ENCODE measurements at regions of chr10 and their contacts with region 1.

Region 1: DNA sequence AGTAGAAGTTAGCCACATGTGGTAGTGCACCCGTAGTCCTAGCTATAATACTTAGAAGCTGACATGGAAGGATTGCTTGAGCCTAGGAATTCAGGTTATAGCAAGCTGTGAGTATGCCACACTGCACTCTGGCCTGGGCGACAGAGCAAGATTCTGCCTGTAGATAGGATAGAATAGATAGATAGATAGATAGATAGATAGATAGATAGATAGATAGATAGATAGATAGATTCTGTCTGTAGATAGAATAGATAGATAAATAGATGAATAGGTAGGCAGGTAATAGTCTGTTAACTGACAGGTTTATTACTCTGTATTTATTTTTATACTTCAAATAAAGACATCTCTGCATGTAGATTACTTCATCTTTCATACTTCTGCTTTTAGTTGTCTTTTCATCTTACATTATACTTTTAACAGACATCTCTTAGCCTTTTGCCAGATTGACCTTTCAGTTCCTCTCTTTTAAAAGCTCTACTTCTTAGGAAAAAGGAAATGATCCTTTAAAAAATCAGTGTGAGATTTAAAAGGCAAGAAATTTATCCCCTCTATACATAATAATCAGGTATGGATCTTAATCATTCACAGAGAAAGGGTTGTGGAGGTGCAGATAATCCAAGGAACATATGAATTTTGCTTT is 31.8 kb downstream of the CCAR1 start:
- DNase-seq: no peak
- ATAC-seq: no peak

Region 2: GRCh38 chr10:68924593-68924992 is 171.8 kb after region 1 on chr10:
- intact Hi-C with region 1: loop called in 1 of 2 experiments (anchors 10 kb)
- DNase-seq: no peak
- ATAC-seq: no peak

Measured in left colon (tissue), 2 donors.